ENCODE measurements at regions of chr3 and their contacts with region 1.

Region 1: DNA sequence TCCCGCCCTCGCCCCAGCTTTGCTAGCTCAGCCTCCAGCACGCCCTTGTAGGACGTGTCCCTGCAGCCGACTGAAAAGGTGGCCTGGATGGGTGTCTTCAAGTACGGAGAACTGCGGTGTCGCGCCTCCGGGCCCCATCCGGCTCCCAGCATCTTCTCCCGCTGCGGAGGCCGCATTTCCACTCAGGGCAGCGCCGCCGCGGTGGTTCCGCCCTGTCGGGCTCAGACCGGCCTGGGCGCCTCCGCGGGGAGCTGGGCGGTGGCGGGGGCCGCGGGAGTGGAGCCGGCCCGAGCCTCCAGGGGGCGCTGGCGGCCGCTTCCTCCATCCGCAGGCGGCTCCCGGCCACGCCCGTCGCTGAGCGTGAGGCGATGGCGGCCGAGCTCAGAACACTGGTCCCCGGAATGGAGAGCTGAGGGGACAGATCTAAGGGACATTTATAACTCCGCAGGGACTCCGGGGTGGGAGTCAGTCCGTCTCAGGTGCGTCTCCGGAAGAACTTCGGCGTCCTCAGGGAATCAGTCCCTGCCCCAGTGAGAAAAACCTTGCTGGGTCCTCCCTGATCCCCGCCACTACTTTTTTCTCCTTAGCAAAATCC is 13.6 kb upstream of the SMCO1 start:
- DNase-seq: peak; percentile 59 to 78 (median 66)
- H3K4me3 ChIP-seq: peak overlapping the region; percentile 47 to 60
- H3K4me3 Mint-ChIP-seq: peak overlapping the region; percentile 42 to 84 (median 70)
- H3K27ac ChIP-seq: no peak overlapping the region
- H3K27ac Mint-ChIP-seq: peak overlapping the region in 5 of 7 donors; percentile 23 to 85 (median 46)
- H3K4me1 ChIP-seq: no peaks in the 10 kb centered on the region
- H3K4me1 Mint-ChIP-seq: peaks cover 0 to 5% (median 5%) of the 10 kb centered on the region in 4 donors
- H3K27me3 ChIP-seq: no peaks in the 10 kb centered on the region
- H3K27me3 Mint-ChIP-seq: peaks cover 0 to 5% of the 10 kb centered on the region in 2 donors

Region 2: GRCh38 chr3:196251918-196252317 is 276.8 kb before region 1 on chr3:
- CTCF ChIA-PET with region 1: interaction called, 113 read pairs
- POLR2A ChIA-PET with region 1: no interaction called
- intact Hi-C with region 1: no loop called
- DNase-seq: no peak
- H3K4me3 ChIP-seq: no peak overlapping the region
- H3K4me3 Mint-ChIP-seq: peak overlapping the region in 1 of 8 donors; percentile 12
- H3K27ac ChIP-seq: no peak overlapping the region
- H3K27ac Mint-ChIP-seq: peak overlapping the region in 3 of 7 donors; percentile 61 to 85 (median 83)
- H3K4me1 ChIP-seq: no peaks in the 10 kb centered on the region
- H3K4me1 Mint-ChIP-seq: peaks cover 7 to 23% (median 12%) of the 10 kb centered on the region in 4 donors
- H3K27me3 ChIP-seq: no peaks in the 10 kb centered on the region
- H3K27me3 Mint-ChIP-seq: no peaks in the 10 kb centered on the region

Region 3: GRCh38 chr3:196486263-196486662 is 42.5 kb before region 1 on chr3:
- CTCF ChIA-PET with region 1: interaction called, 74 read pairs
- POLR2A ChIA-PET with region 1: no interaction called
- intact Hi-C with region 1: no loop called
- DNase-seq: peak in 3 of 5 donors; percentile 9 to 21 (median 15)
- H3K4me3 ChIP-seq: no peak overlapping the region
- H3K4me3 Mint-ChIP-seq: peak overlapping the region in 1 of 8 donors; percentile 43
- H3K27ac ChIP-seq: no peak overlapping the region
- H3K27ac Mint-ChIP-seq: no peak overlapping the region
- H3K4me1 ChIP-seq: peaks cover 10% of the 10 kb centered on the region
- H3K4me1 Mint-ChIP-seq: peaks cover 8 to 21% (median 13%) of the 10 kb centered on the region in 4 donors
- H3K27me3 ChIP-seq: no peaks in the 10 kb centered on the region
- H3K27me3 Mint-ChIP-seq: no peaks in the 10 kb centered on the region

Region 4: GRCh38 chr3:196502775-196503195 is 26.0 kb before region 1 on chr3:
- CTCF ChIA-PET with region 1: interaction called, 3 read pairs
- POLR2A ChIA-PET with region 1: interaction called, 29 read pairs
- intact Hi-C with region 1: loop called (anchors 1 kb)
- DNase-seq: peak; percentile 70 to 87 (median 73)
- H3K4me3 ChIP-seq: peak overlapping the region; percentile 70 to 79
- H3K4me3 Mint-ChIP-seq: peak overlapping the region; percentile 97 to 100 (median 98)
- H3K27ac ChIP-seq: peak overlapping the region; percentile 81
- H3K27ac Mint-ChIP-seq: peak overlapping the region; percentile 94 to 99 (median 97)
- H3K4me1 ChIP-seq: peaks cover 27% of the 10 kb centered on the region
- H3K4me1 Mint-ChIP-seq: peaks cover 25 to 56% (median 38%) of the 10 kb centered on the region in 4 donors
- H3K27me3 ChIP-seq: no peaks in the 10 kb centered on the region
- H3K27me3 Mint-ChIP-seq: no peaks in the 10 kb centered on the region

Region 5: GRCh38 chr3:196513697-196514349 is 14.9 kb before region 1 on chr3:
- CTCF ChIA-PET with region 1: interaction called, 16 read pairs
- POLR2A ChIA-PET with region 1: no interaction called
- intact Hi-C with region 1: no loop called
- DNase-seq: no peak
- H3K4me3 ChIP-seq: no peak overlapping the region
- H3K4me3 Mint-ChIP-seq: no peak overlapping the region
- H3K27ac ChIP-seq: no peak overlapping the region
- H3K27ac Mint-ChIP-seq: no peak overlapping the region
- H3K4me1 ChIP-seq: no peaks in the 10 kb centered on the region
- H3K4me1 Mint-ChIP-seq: peaks cover 0 to 3% (median 0%) of the 10 kb centered on the region in 4 donors
- H3K27me3 ChIP-seq: no peaks in the 10 kb centered on the region
- H3K27me3 Mint-ChIP-seq: no peaks in the 10 kb centered on the region

Region 6: DNA sequence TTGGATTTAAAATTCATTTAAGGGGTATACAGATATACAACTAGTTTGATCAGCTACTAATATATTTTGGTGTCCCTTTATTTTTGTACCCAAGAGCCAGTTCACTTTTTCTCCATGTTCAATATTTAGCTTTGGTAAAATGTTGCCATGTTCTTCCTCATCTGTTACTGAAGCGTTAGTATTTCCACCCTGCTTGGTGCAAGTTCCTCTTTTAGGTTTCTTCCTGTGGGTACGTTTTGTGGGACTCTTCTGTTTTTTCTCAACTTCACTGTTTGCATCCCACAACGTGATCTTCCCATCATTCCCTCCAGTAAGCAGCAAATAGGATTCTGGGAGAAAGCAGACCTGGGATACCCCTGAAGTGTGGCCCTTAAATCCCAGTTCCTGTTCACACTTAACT is 25.5 kb after region 1 on chr3:
- CTCF ChIA-PET with region 1: interaction called, 15 read pairs
- POLR2A ChIA-PET with region 1: no interaction called
- intact Hi-C with region 1: no loop called
- DNase-seq: no peak
- H3K4me3 ChIP-seq: no peak overlapping the region
- H3K4me3 Mint-ChIP-seq: no peak overlapping the region
- H3K27ac ChIP-seq: no peak overlapping the region
- H3K27ac Mint-ChIP-seq: peak overlapping the region in 4 of 7 donors; percentile 30 to 85 (median 72)
- H3K4me1 ChIP-seq: peaks cover under 1% of the 10 kb centered on the region
- H3K4me1 Mint-ChIP-seq: peaks cover 8 to 9% (median 9%) of the 10 kb centered on the region in 4 donors
- H3K27me3 ChIP-seq: no peaks in the 10 kb centered on the region
- H3K27me3 Mint-ChIP-seq: no peaks in the 10 kb centered on the region

Region 7: DNA sequence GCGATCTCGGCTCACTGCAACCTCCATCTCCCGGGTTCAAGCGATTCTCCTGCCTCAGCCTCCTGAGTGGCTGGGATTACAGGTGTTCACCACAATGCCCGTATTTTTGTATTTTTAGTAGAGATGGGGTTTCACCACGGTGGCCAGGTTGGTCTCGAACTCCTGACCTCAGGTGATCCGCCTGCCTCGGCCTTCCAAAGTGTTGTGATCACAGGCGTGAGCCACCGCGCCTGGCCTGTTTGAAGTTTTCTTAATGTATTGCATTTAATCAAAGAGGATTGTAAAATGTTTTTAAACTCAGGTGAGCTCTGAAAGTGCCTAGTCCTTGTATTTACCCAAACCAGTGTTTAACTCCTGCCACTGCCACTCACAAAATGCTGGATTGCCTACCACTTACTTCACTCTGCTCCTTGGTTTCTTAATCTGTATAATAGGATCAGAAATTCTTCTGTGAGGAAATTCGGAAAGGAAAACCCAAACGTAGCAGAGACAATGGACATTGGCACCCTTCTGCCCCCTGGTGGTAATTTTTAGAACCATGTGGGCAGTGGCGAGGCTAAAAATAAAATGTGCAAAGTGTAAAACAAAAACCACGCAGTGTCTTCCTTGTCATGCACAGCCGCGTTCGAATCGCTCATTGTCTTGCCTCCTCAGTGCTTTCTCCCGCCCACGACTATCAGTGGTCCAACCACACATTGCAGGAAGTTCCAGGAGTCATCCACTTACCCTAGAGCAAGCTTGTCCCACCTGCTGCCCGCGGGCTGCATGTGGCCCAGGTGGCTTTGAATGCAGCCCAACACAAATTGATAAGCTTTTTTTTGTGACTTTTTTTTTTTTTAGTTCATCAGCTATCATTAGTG is 156.0 kb after region 1 on chr3:
- CTCF ChIA-PET with region 1: interaction called, 8 read pairs
- POLR2A ChIA-PET with region 1: interaction called, 3 read pairs
- intact Hi-C with region 1: loop called (anchors 2 kb)
- DNase-seq: peak; percentile 61 to 75 (median 65)
- H3K4me3 ChIP-seq: peak overlapping the region in 1 of 2 donors; percentile 40
- H3K4me3 Mint-ChIP-seq: peak overlapping the region; percentile 39 to 80 (median 70)
- H3K27ac ChIP-seq: no peak overlapping the region
- H3K27ac Mint-ChIP-seq: peak overlapping the region in 5 of 7 donors; percentile 19 to 81 (median 64)
- H3K4me1 ChIP-seq: peaks cover 11% of the 10 kb centered on the region
- H3K4me1 Mint-ChIP-seq: peaks cover 10 to 16% (median 14%) of the 10 kb centered on the region in 4 donors
- H3K27me3 ChIP-seq: no peaks in the 10 kb centered on the region
- H3K27me3 Mint-ChIP-seq: no peaks in the 10 kb centered on the region

Region 8: GRCh38 chr3:197394464-197395321 is 866.0 kb after region 1 on chr3:
- CTCF ChIA-PET with region 1: no interaction called
- POLR2A ChIA-PET with region 1: no interaction called
- intact Hi-C with region 1: no loop called
- DNase-seq: peak in 1 of 5 donors; percentile 18
- H3K4me3 ChIP-seq: no peak overlapping the region
- H3K4me3 Mint-ChIP-seq: peak overlapping the region in 2 of 8 donors; percentile 12 to 55
- H3K27ac ChIP-seq: no peak overlapping the region
- H3K27ac Mint-ChIP-seq: peak overlapping the region in 2 of 7 donors; percentile 48 to 89
- H3K4me1 ChIP-seq: no peaks in the 10 kb centered on the region
- H3K4me1 Mint-ChIP-seq: no peaks in the 10 kb centered on the region
- H3K27me3 ChIP-seq: peaks cover 4% of the 10 kb centered on the region
- H3K27me3 Mint-ChIP-seq: peaks cover 13 to 15% of the 10 kb centered on the region in 2 donors

Measured in CD4-positive, alpha-beta memory T cell (primary cell).